Pancreas (tissue), 10 donors: ENCODE measurements at regions of chr19 and their contacts with region 1.

Region 1: DNA sequence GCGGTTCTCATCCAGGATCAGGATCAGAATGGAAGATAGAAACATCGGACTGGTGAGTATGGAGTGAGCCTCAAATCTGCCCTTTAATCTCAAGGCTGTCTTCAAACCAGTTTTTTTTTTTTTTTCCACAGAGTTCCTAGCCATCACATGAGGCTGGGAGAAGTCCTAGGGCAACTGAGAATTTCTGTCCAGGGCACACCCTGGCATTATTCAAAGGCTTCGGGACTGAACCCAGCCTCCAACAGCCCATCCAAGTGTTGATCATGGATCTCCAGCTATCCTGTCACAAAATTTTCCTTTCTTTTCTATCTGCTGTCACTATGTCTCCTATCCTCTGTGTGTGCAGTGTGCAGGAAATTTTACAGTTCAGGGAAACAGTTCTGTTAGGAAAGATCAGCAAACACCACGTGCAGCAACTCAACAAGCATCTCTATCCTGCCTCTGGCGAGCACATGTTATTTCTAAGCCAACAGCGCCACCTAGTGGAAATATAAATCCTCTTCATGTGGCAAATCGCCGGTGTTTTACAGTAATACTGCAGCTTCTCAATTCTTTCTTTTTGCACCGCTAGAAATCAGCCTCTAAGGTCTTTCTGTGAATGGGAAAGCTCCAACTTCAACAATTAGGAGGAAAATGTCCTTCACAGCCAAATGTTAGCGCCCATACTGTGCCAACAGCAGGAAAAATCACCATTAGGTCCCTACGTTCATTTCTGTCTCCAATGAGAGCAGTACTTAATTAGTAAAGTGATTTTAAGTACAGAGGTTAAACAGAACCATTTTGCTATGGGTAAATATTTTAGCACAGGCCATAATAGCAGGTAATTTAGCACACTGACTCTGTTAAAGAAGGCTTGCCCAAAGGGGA is 21.4 kb upstream of the ZNF181 start:
- DNase-seq: peak in 3 of 6 donors; percentile 48 to 72 (median 50)
- ATAC-seq: peak; percentile 77 to 91 (median 90)
- H3K4me3 ChIP-seq: no peak overlapping the region
- H3K27ac ChIP-seq: no peak overlapping the region
- H3K4me1 ChIP-seq: peaks cover 0 to 3% (median 0%) of the 10 kb centered on the region in 3 donors
- H3K27me3 ChIP-seq: no peaks in the 10 kb centered on the region
- CTCF ChIP-seq: peak; percentile 61 to 86 (median 77)

Region 2: GRCh38 chr19:34501339-34502320 is 211.0 kb before region 1 on chr19:
- intact Hi-C with region 1: loop called in 2 of 3 experiments (anchors 10 kb)
- DNase-seq: peak; percentile 87 to 99 (median 96)
- ATAC-seq: peak; percentile 95 to 99 (median 96)
- H3K4me3 ChIP-seq: no peak overlapping the region
- H3K27ac ChIP-seq: no peak overlapping the region
- H3K4me1 ChIP-seq: no peaks in the 10 kb centered on the region
- H3K27me3 ChIP-seq: no peaks in the 10 kb centered on the region
- CTCF ChIP-seq: peak; percentile 99 to 100 (median 99)

Region 3: GRCh38 chr19:34556488-34556887 is 156.1 kb before region 1 on chr19:
- intact Hi-C with region 1: loop called in 1 of 3 experiments (anchors 10 kb)
- DNase-seq: peak in 5 of 6 donors; percentile 39 to 55 (median 53)
- ATAC-seq: peak; percentile 68 to 87 (median 82)
- H3K4me3 ChIP-seq: no peak overlapping the region
- H3K27ac ChIP-seq: no peak overlapping the region
- H3K4me1 ChIP-seq: no peaks in the 10 kb centered on the region
- H3K27me3 ChIP-seq: no peaks in the 10 kb centered on the region
- CTCF ChIP-seq: peak in 2 of 4 donors; percentile 37 to 51

Region 4: GRCh38 chr19:34639491-34640085 is 73.0 kb before region 1 on chr19:
- intact Hi-C with region 1: loop called (anchors 5 to 10 kb)
- DNase-seq: peak in 3 of 6 donors; percentile 42 to 70 (median 67)
- ATAC-seq: peak; percentile 78 to 97 (median 86)
- H3K4me3 ChIP-seq: no peak overlapping the region
- H3K27ac ChIP-seq: no peak overlapping the region
- H3K4me1 ChIP-seq: no peaks in the 10 kb centered on the region
- H3K27me3 ChIP-seq: no peaks in the 10 kb centered on the region
- CTCF ChIP-seq: peak; percentile 37 to 80 (median 78)

Region 5: GRCh38 chr19:34962687-34963572 is 250.3 kb after region 1 on chr19:
- intact Hi-C with region 1: no loop called
- DNase-seq: peak in 1 of 6 donors; percentile 16
- ATAC-seq: peak; percentile 26 to 38 (median 30)
- H3K4me3 ChIP-seq: peak overlapping the region; percentile 96 to 98 (median 97)
- H3K27ac ChIP-seq: peak overlapping the region in 3 of 4 donors; percentile 0 to 53 (median 10)
- H3K4me1 ChIP-seq: peaks cover 0 to 10% (median 5%) of the 10 kb centered on the region in 3 donors
- H3K27me3 ChIP-seq: no peaks in the 10 kb centered on the region
- CTCF ChIP-seq: no peak

Region 6: GRCh38 chr19:35204799-35205732 is 492.4 kb after region 1 on chr19:
- intact Hi-C with region 1: no loop called
- DNase-seq: no peak
- ATAC-seq: peak in 3 of 4 donors; percentile 26 to 79 (median 71)
- H3K4me3 ChIP-seq: no peak overlapping the region
- H3K27ac ChIP-seq: no peak overlapping the region
- H3K4me1 ChIP-seq: peaks cover 0 to 7% (median 0%) of the 10 kb centered on the region in 3 donors
- H3K27me3 ChIP-seq: no peaks in the 10 kb centered on the region
- CTCF ChIP-seq: no peak